Adrenal gland (tissue), 19 donors: ENCODE measurements at regions of chr17 and their contacts with region 1.

Region 1: GRCh38 chr17:82518826-82519810 is at the start of gene FOXK2:
- DNase-seq: peak; percentile 92 to 97 (median 95)
- H3K4me3 ChIP-seq: peak within 1 kb of the TSS in 3 of 4 donors; percentile 33 to 99 (median 56)
- H3K27ac ChIP-seq: peak within 1 kb of the TSS; percentile 94 to 100 (median 99)
- H3K4me1 ChIP-seq: peaks cover 13 to 32% of the 10 kb centered on the region in 2 donors
- H3K27me3 ChIP-seq: no peaks in the 10 kb centered on the region
- CTCF ChIP-seq: peak in 1 of 6 experiments; percentile 39
- POLR2A ChIP-seq: peak; percentile 78 to 95
- total RNA-seq, gene FOXK2: 30.5 to 138 (median 50.0) TPM

Region 2: DNA sequence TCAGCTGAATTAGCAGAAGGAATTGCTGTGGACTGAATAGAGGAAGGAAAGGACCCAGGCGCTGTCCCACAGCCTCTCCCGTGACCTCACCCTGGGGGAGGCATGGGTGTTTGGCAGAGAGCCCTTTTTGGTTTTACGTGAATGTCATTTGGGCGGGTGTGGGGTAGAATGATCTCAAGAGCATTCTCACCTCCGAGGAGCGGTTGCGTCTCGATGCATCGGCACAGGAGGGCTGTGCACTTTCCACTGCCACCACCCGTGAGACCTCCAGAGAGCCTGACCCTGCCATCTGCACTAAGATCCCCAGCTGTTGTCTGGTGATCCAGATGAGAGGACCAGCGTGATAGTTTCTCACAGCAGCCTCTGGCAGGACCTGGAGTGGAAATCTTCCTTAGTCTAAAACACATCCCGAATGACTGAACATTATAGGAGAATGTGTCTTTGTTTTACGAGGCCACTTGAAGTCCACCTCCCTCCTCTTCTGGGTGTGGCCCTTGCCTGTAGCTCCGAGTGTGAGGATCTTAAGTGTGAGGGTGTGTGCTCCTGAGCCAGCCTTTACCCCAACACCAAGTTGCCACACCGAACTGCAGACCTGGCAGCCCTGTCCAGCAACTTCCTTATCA is 29.7 kb after region 1 on chr17:
- intact Hi-C with region 1: loop called in 1 of 2 experiments (anchors 5 kb)
- DNase-seq: peak in 6 of 7 donors; percentile 48 to 72 (median 58)
- H3K4me3 ChIP-seq: no peak overlapping the region
- H3K27ac ChIP-seq: peak overlapping the region in 3 of 5 donors; percentile 20 to 70 (median 52)
- H3K4me1 ChIP-seq: peaks cover 40 to 54% of the 10 kb centered on the region in 2 donors
- H3K27me3 ChIP-seq: no peaks in the 10 kb centered on the region
- CTCF ChIP-seq: no peak
- POLR2A ChIP-seq: no peak

Region 3: DNA sequence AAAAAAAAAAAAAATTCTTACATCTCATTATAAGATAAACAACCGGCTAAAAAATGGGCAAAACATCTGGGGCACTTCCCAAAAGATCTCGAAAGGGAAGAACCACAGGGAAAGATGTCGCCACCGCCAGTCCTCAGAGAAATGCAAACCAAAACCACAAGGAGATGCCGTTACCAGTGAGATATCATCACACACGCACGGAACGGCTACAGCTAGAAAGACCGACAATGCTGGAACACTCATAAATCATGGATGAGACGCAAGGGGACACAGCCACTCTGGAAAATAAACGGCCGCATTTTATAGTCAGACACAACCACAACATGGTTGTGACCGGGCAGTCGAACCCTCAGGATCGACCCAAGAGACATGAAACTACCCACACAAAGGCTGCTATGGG is 104.6 kb after region 1 on chr17:
- intact Hi-C with region 1: no loop called
- DNase-seq: no peak
- H3K4me3 ChIP-seq: no peak overlapping the region
- H3K27ac ChIP-seq: no peak overlapping the region
- H3K4me1 ChIP-seq: peaks cover 14 to 17% of the 10 kb centered on the region in 2 donors
- H3K27me3 ChIP-seq: no peaks in the 10 kb centered on the region
- CTCF ChIP-seq: no peak
- POLR2A ChIP-seq: no peak